ENCODE measurements at regions of chr20 and their contacts with region 1.

Region 1: DNA sequence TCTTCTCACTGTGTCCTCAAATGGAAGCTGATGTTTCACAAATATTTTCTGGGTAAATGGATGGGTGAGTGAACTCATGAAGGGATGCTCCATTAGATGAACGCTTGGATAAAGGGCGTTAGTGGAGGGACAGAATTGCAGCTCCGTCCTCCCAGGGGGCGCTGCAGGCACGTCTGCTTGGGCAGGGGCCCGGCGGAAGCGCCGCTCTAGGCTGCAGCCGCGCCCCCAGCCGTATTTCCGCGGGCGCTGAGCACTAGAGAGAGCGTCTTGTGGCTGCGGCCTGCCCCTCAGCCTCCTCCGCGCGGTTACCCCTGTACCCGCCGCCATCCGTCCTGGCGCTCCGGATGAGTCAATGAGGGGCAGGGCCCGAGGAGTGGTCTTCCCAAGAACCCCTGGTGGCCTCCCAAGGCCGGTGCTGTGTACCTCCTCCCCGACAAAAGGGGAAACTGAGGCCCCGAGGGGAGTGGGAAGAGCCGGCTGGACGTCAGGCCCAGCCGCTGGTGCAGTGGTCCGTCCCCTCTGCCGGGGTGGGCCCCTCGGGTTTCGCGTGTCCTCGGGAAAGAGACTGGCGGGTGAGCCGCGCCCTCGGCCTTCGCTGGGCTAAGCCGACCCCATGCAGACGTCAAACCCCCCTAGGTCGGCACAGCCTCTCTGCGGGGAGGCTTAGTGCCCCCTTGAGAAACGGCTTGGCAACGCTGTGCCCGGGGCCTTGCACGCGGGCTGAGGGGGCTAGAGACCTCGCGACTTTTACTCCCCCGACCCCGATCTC is 11.5 kb upstream of the SNHG17 start:
- DNase-seq: peak; percentile 84 to 94 (median 90)
- H3K4me3 ChIP-seq: peak overlapping the region; percentile 59 to 100 (median 93)
- H3K27ac ChIP-seq: peak overlapping the region; percentile 1 to 97 (median 82)
- H3K27me3 ChIP-seq: no peaks in the 10 kb centered on the region
- CTCF ChIP-seq: peak; percentile 92 to 100 (median 99)

Region 2: GRCh38 chr20:38434743-38435554 is 11.7 kb before region 1 on chr20 and contains the start of gene SNHG17:
- intact Hi-C with region 1: loop called (anchors 1 kb)
- DNase-seq: peak; percentile 83 to 94 (median 90)
- H3K4me3 ChIP-seq: peak within 1 kb of the TSS; percentile 57 to 93 (median 78)
- H3K27ac ChIP-seq: peak within 1 kb of the TSS in 57 of 59 donors; percentile 11 to 94 (median 78)
- H3K27me3 ChIP-seq: no peaks in the 10 kb centered on the region
- CTCF ChIP-seq: peak; percentile 97 to 100 (median 100)
- total RNA-seq, gene SNHG17: 8.5 to 42.6 (median 18.6) TPM

Region 3: GRCh38 chr20:38472513-38473372 is 26.1 kb after region 1 on chr20 and contains the start of gene RALGAPB:
- intact Hi-C with region 1: loop called in 1 of 2 experiments (anchors 2 kb)
- DNase-seq: peak; percentile 94 to 98 (median 97)
- H3K4me3 ChIP-seq: peak within 1 kb of the TSS; percentile 61 to 98 (median 89)
- H3K27ac ChIP-seq: peak within 1 kb of the TSS; percentile 9 to 91 (median 83)
- H3K27me3 ChIP-seq: no peaks in the 10 kb centered on the region
- CTCF ChIP-seq: peak in 55 of 56 donors; percentile 30 to 77 (median 58)
- total RNA-seq, gene RALGAPB: 40.2 to 59.9 (median 49.0) TPM

Region 4: GRCh38 chr20:38751360-38751976 is 304.8 kb after region 1 on chr20:
- intact Hi-C with region 1: no loop called
- DNase-seq: no peak
- H3K4me3 ChIP-seq: peak overlapping the region in 1 of 59 donors; percentile 4
- H3K27ac ChIP-seq: no peak overlapping the region
- H3K27me3 ChIP-seq: no peaks in the 10 kb centered on the region
- CTCF ChIP-seq: peak; percentile 58 to 88 (median 74)

Measured in dorsolateral prefrontal cortex (tissue), 120 donors.